ENCODE measurements at regions of chr6 and their contacts with region 1.

Region 1: DNA sequence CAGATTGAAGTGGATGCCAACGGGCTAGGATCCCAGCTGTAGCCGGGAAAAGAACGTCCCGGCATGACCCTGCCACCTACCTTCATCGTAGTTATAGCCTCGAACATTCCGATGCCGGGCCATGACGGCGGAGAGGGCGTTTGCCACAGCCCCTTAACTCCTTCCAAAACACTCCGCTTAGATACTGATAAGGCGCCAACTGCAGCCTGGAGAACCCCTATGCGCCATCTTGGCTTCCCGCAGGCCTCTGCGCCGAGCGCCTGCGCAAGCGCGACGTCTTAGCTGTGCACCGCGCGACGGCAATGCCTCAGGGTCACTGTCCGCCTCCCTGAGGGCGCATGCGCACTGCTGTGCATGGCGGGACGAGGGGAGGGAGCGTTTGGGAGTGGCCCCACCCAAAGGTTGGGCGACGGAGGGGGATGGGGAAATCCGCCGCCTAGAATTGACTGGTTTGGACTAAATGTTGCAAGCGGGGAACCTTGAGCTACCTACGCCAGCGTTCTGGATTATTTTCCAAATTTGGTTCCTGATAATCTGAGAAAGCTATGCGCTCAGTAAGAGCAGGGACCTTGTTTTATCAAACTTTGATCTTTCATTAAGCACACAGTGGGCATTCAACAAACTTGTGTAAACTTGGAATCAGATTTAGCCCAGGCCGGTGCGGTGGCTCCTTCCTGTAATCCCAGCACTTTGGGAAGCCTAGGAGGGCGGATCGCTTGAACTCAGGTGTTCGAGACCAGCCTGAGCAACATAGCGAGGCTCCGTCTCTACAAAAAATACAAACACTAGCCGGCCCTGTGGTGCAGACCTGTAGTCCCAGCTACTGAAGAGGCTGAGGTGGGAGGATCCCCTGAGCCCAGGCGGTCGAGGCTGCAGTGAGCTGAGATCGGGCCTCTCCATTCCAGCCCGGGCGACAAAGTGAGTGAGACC is at the start of gene HBS1L:
- DNase-seq: peak; percentile 96 to 97
- H3K4me3 ChIP-seq: peak within 1 kb of the TSS; percentile 79 to 99 (median 96)
- H3K27ac ChIP-seq: peak within 1 kb of the TSS; percentile 94
- H3K4me1 ChIP-seq: peaks cover 0 to 2% (median 1%) of the 10 kb centered on the region in 4 experiments; a peak in 4 of 7 replicates
- H3K27me3 ChIP-seq: no peaks in the 10 kb centered on the region
- CTCF ChIP-seq: no peak
- EP300 ChIP-seq: no peak
- POLR2A ChIP-seq: peak; percentile 91 to 94
- RAD21 ChIP-seq: no peak
- total RNA-seq, gene HBS1L: 96.2 and 97.1 TPM in 2 replicates

Region 2: DNA sequence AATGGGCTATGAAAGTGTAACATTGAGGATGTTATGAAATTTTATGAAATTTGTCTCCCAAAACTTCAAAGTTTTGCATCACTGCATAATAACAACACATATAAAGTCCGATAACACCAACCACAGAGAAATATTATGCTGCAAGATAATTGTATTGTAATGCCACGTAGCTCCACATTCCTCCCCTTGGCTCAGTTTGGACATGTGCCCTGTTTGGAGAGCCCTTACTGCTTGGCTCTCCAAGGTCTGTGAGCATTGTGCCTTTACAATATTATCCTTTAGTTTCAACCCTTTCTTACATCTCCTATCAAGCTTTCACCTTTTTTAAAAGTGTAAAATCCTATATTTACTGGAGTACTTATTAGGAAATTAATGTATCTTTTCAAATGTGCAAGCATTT is 11.0 kb before region 1 on chr6:
- CTCF ChIA-PET with region 1: no interaction called
- POLR2A ChIA-PET with region 1: interaction called, 10 read pairs
- DNase-seq: no peak
- H3K4me3 ChIP-seq: no peak overlapping the region
- H3K27ac ChIP-seq: no peak overlapping the region
- H3K4me1 ChIP-seq: no peaks in the 10 kb centered on the region
- H3K27me3 ChIP-seq: no peaks in the 10 kb centered on the region
- CTCF ChIP-seq: no peak
- EP300 ChIP-seq: no peak
- POLR2A ChIP-seq: no peak
- RAD21 ChIP-seq: no peak

Region 3: GRCh38 chr6:135088818-135089809 is 34.3 kb after region 1 on chr6:
- CTCF ChIA-PET with region 1: interaction called, 12 read pairs
- POLR2A ChIA-PET with region 1: interaction called, 4 read pairs
- DNase-seq: no peak
- H3K4me3 ChIP-seq: no peak overlapping the region
- H3K27ac ChIP-seq: no peak overlapping the region
- H3K4me1 ChIP-seq: no peaks in the 10 kb centered on the region; a peak in 2 of 7 replicates
- H3K27me3 ChIP-seq: no peaks in the 10 kb centered on the region; a peak in 1 of 7 replicates
- CTCF ChIP-seq: peak in 1 of 3 experiments; percentile 37; a peak in 2 of 4 replicates
- EP300 ChIP-seq: no peak
- POLR2A ChIP-seq: no peak
- RAD21 ChIP-seq: peak in 1 of 2 experiments; percentile 11; a peak in 1 of 4 replicates